Activated T-helper 1 cell treated with anti-CD3 and anti-CD28 coated beads, Interleukin-12 subunit alpha, Interleukin-12 subunit beta, Interleukin-2, Interleukin-4 antibody, amounts not matched to agents 30 ng/mL and 10 ng/mL and 1 ng/mL, durations not matched to agents 14 hours and 24 hours and 36 hours (primary cell): ENCODE measurements at regions of chr18 and their contacts with region 1.

Region 1: DNA sequence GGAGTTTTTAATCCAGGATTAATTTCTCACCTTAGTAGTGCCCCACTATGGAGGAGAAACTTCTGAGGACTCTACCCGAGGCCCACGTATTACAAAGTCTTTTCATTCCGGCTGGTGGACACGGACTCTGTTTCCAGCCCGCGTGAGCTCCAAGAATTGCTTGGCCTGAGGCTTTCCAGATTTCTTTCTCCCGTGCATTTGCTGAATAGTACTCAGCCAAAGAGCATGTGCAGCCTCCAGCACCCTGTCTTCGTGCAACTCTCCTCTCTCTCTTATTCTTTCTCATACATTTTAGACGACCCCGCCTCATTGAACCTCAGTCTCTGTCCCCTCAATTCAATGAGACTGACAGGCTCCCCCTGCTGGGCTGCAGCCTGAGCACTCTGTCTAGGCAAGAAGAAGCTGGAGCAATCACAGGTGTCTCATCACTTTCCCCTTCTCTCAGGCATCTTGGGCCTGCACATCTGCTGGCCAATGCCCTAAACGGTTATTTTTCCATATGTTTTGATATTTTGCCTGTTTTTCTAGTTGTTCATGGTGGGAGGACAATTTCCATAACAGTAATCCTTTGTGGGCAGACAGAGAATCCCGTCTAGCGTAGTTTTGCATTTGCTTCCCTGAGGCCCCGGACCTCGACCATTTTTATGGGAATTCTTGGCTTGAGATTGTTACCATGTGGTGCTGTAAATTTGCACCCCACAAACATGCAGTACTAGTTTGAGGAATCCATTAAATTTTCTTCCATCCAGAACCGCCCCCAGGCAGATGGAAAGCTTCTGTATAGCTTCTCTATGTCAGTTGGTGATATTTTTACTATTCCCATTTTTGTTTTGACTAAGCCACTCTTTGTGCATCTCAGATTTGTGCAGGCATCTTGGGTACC is 50.1 kb upstream of the LPIN2 start:
- DNase-seq: peak; percentile 64
- H3K4me3 Mint-ChIP-seq: peak overlapping the region; percentile 66
- H3K27ac Mint-ChIP-seq: peak overlapping the region; percentile 99
- H3K4me1 Mint-ChIP-seq: peaks cover 67% of the 10 kb centered on the region
- H3K27me3 Mint-ChIP-seq: no peaks in the 10 kb centered on the region

Region 2: DNA sequence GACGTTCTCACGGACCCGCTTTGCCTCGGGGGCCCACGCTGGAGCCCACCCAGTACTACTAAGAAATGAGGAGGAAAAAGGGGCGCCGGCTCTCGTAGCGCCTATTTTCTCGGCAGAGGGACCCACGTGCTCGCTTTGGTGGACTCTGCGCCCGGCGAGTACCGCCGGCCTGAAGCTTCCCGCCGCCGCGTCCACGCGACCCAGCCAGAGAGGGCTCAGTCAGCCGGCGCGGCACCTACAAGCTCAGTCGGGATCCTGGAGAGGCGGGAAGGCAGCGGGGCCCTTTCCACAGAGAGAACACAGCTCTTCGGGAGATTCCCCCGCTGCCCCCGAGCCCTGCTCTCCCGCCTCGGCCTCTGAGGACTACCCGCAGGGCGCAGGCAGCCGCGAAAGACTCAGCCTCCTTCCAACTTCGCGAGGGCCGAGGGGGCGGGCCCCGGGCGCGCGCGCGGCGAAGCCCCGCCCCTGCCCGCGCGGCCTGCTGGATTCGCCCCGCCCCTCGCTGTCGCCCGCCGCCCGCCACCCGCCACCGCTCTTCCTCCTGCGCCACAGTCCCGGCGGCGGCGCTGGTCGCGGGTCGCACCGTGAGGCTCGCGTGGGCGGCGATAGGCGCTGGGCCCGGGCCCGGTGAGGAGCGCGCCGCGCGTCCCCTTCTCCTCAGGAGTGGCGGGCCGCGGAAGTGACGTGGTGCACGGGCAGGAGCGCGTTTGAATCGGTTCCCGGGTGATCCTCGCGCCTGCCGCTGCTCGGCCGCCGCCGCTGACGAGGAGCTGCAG is 407.7 kb before region 1 on chr18 and contains the start of gene SMCHD1:
- intact Hi-C with region 1: loop called (anchors 5 kb)
- DNase-seq: peak; percentile 86
- H3K4me3 Mint-ChIP-seq: peak within 1 kb of the TSS; percentile 88
- H3K27ac Mint-ChIP-seq: peak within 1 kb of the TSS; percentile 96
- H3K4me1 Mint-ChIP-seq: peaks cover 36% of the 10 kb centered on the region
- H3K27me3 Mint-ChIP-seq: peaks cover 2% of the 10 kb centered on the region
- total RNA-seq, gene SMCHD1: 98.6 and 112 TPM in 2 replicates

Region 3: GRCh38 chr18:2857491-2858131 is 205.4 kb before region 1 on chr18:
- intact Hi-C with region 1: no loop called
- DNase-seq: no peak
- H3K4me3 Mint-ChIP-seq: no peak overlapping the region
- H3K27ac Mint-ChIP-seq: no peak overlapping the region
- H3K4me1 Mint-ChIP-seq: peaks cover 14% of the 10 kb centered on the region
- H3K27me3 Mint-ChIP-seq: peaks cover 5% of the 10 kb centered on the region

Region 4: GRCh38 chr18:2958819-2959298 is 104.2 kb before region 1 on chr18:
- intact Hi-C with region 1: loop called (anchors 1 kb)
- DNase-seq: peak; percentile 46
- H3K4me3 Mint-ChIP-seq: peak overlapping the region; percentile 81
- H3K27ac Mint-ChIP-seq: peak overlapping the region; percentile 99
- H3K4me1 Mint-ChIP-seq: peaks cover 93% of the 10 kb centered on the region
- H3K27me3 Mint-ChIP-seq: no peaks in the 10 kb centered on the region

Region 5: DNA sequence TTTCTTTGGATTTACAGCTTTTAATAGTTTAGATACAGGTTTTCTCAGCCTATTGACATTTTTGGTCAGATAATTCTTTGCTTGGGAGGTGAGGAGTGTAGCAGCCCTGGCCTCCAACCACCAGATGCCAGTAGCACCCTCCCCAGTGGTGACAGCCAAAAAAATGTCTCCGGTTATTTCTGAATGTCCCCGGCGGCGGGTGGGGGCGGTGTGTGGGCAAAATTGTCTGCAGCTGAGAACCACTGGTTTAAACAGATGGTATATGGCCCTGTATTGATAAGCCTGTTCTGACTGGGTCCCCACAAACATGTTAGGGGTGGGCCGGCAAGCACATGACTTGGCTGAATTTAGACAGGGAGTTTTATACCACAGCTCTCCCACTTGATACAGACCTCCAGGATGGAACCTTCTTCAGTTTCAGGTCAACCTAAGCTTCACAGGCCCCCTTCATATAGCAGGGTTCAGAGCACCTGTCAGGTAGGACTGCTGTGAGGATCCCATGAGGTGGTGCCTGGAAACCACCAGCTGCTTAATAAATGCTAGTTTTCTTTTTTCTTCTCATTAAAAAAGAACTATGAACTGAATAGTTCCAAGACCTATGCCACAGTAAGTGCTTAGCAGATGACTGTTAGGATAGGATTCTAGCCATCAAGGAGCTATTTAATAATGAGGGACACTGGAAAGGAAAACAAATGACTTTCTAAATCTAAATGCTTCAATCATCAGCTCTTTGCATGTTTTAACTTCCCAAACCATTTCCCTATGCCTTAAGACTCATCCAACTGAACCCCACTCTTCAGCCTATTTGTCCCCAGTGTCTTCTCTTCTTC is 68.2 kb before region 1 on chr18:
- intact Hi-C with region 1: loop called (anchors 1 kb)
- DNase-seq: peak; percentile 58
- H3K4me3 Mint-ChIP-seq: peak overlapping the region; percentile 60
- H3K27ac Mint-ChIP-seq: peak overlapping the region; percentile 83
- H3K4me1 Mint-ChIP-seq: peaks cover 82% of the 10 kb centered on the region
- H3K27me3 Mint-ChIP-seq: no peaks in the 10 kb centered on the region

Region 6: DNA sequence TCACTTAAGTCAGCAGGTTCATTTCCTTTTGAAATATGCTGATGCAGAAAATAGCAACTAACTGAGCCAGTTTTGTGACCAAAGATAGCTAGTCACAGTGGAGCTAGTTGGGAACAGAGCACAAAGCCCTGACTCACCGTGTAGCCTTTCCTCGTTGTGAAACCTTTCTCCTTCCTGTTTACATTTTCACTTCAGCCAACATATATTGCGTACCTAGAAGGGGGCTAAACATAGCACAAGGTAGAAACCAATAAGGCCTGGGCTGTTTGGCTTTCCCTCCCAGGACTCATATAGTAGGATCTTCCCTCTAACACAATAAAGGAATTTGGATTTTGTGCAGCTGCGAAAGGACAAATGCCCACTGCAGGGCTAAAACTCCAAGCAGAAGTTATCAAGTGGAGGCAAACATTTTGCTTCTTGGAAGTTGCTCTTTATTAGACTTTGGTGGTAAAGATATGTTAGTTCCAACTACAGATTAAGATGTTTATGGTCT is 25.6 kb before region 1 on chr18:
- intact Hi-C with region 1: loop called (anchors 1 kb)
- DNase-seq: peak; percentile 34
- H3K4me3 Mint-ChIP-seq: peak overlapping the region; percentile 50
- H3K27ac Mint-ChIP-seq: peak overlapping the region; percentile 82
- H3K4me1 Mint-ChIP-seq: peaks cover 33% of the 10 kb centered on the region
- H3K27me3 Mint-ChIP-seq: no peaks in the 10 kb centered on the region

Region 7: GRCh38 chr18:3104190-3105054 is 41.4 kb after region 1 on chr18:
- intact Hi-C with region 1: loop called (anchors 5 kb)
- DNase-seq: no peak
- H3K4me3 Mint-ChIP-seq: no peak overlapping the region
- H3K27ac Mint-ChIP-seq: no peak overlapping the region
- H3K4me1 Mint-ChIP-seq: no peaks in the 10 kb centered on the region
- H3K27me3 Mint-ChIP-seq: peaks cover 5% of the 10 kb centered on the region

Region 8: GRCh38 chr18:3604498-3605408 is 541.7 kb after region 1 on chr18:
- intact Hi-C with region 1: loop called (anchors 1 kb)
- DNase-seq: peak; percentile 38
- H3K4me3 Mint-ChIP-seq: no peak overlapping the region
- H3K27ac Mint-ChIP-seq: no peak overlapping the region
- H3K4me1 Mint-ChIP-seq: peaks cover 19% of the 10 kb centered on the region
- H3K27me3 Mint-ChIP-seq: no peaks in the 10 kb centered on the region